Tibial artery (tissue), 4 donors: ENCODE measurements at regions of chr14 and their contacts with region 1.

Region 1: DNA sequence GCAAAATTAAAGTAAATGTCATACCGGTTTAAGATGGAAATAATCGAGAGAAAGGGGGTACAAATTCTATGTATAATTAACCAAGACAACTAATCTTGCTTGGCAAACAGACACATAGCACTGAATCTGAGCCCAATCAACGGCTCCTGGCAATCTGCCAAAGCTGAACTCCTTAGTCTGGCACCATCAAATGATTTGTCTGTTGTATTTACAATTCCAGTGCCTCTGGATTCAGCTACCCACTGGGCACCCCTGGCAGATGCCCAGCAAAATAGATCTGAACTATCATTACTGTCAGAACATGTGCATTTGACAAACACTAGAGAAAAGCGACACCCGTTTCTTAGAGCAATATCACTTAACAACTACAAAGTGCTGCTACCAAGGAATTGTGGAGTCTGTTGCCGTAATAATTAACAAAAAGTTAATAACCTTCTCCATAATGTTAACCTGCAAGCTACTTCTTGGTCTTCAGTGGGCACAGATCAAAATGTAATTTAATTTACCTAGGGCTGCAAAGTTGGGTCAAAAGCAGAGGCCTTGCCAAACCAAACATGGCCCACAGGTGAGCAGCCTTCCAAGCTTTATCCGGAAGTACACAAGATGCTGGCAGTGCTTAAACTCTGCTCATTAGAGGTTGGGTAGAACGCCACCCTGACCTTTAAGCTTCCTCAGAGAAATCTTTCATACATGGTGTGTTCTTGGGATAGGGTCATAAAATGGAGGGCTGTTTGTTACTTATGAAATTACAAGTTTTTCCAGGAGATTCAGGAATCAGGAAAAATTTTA is 7.6 kb downstream of the EGLN3 start:
- DNase-seq: no peak
- H3K4me3 ChIP-seq: no peak overlapping the region
- H3K27ac ChIP-seq: no peak overlapping the region
- H3K4me1 ChIP-seq: peaks cover 0 to 80% (median 27%) of the 10 kb centered on the region in 4 donors
- H3K27me3 ChIP-seq: no peaks in the 10 kb centered on the region
- CTCF ChIP-seq: no peak

Region 2: DNA sequence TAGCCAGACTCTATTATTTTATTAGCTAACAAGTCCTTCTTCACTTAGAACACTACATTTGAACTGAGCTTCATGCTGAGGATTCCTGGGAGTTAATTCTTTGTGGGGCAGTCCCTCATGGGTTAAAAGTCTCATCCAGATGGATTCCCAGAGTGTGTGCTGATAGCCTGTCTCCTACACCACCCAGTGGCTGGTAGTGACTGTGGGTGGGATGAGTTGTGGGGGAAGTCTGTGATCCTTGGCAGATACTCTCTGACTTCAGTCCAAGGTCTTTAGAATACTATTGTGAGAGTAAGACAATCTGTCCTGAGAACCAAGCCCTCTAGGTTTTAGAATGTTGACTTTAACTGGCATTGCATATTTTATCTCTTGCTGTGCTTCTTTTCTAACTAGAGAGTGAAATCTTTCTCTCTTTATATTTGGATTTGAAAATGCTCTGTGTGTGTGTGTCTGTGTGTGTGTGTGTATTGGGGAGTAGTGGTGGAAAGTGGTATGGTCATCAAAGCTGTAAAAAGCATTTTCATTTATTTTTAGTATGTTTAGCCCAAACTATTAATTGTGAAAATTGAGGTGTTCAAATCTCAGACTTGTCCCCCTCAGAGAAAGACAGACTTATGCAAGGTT is 1576.9 kb before region 1 on chr14:
- intact Hi-C with region 1: no loop called
- DNase-seq: no peak
- H3K4me3 ChIP-seq: no peak overlapping the region
- H3K27ac ChIP-seq: peak overlapping the region; percentile 28 to 40
- H3K4me1 ChIP-seq: peaks cover 0 to 29% (median 19%) of the 10 kb centered on the region in 4 donors
- H3K27me3 ChIP-seq: no peaks in the 10 kb centered on the region
- CTCF ChIP-seq: no peak

Region 3: GRCh38 chr14:34059855-34060638 is 116.8 kb after region 1 on chr14:
- intact Hi-C with region 1: loop called (anchors 5 kb)
- DNase-seq: peak; percentile 72 to 89
- H3K4me3 ChIP-seq: peak overlapping the region; percentile 58 to 64
- H3K27ac ChIP-seq: peak overlapping the region; percentile 90 to 96
- H3K4me1 ChIP-seq: peaks cover 0 to 32% (median 11%) of the 10 kb centered on the region in 4 donors
- H3K27me3 ChIP-seq: no peaks in the 10 kb centered on the region
- CTCF ChIP-seq: peak; percentile 15 to 18

Region 4: DNA sequence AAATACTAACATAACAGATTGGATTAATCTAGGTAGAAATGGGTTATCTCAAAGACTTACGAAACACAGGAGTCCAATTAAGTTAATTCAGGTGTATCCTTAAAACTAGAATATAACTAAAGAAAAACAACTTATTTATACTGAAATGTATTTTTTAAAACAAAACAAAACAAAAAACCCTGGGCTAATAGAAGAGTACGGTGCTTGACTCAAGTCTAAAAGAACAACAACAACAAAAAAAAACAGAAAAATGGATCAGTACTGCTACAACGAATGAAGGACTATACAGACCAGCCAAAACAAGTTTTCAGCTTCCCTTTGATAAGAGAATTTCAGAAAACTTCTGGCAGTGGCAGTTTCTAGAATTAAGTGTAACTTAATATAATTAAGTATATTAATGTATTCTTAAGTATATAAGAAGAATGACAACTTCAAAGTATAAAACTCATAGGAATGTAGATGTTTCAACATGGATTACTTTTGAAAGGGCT is 127.7 kb after region 1 on chr14:
- intact Hi-C with region 1: no loop called
- DNase-seq: no peak
- H3K4me3 ChIP-seq: no peak overlapping the region
- H3K27ac ChIP-seq: no peak overlapping the region
- H3K4me1 ChIP-seq: peaks cover 0 to 21% (median 4%) of the 10 kb centered on the region in 4 donors
- H3K27me3 ChIP-seq: no peaks in the 10 kb centered on the region
- CTCF ChIP-seq: no peak

Region 5: GRCh38 chr14:34750670-34751069 is 807.4 kb after region 1 on chr14:
- intact Hi-C with region 1: no loop called
- DNase-seq: no peak
- H3K4me3 ChIP-seq: no peak overlapping the region
- H3K27ac ChIP-seq: no peak overlapping the region
- H3K4me1 ChIP-seq: no peaks in the 10 kb centered on the region
- H3K27me3 ChIP-seq: no peaks in the 10 kb centered on the region
- CTCF ChIP-seq: no peak